BJ (cell line): ENCODE measurements at regions of chr7 and their contacts with region 1.

Region 1: GRCh38 chr7:129952653-129953560 is at the start of gene UBE2H:
- DNase-seq: peak; percentile 32
- H3K4me3 ChIP-seq: peak within 1 kb of the TSS; percentile 82
- H3K27me3 ChIP-seq: no peaks in the 10 kb centered on the region
- CTCF ChIP-seq: no peak
- polyA plus RNA-seq, gene UBE2H: 37.0 and 93.3 TPM in 2 replicates

Region 2: GRCh38 chr7:129855234-129855673 is 97.7 kb before region 1 on chr7:
- CTCF ChIA-PET with region 1: interaction called, 10 read pairs
- POLR2A ChIA-PET with region 1: no interaction called
- DNase-seq: peak; percentile 99
- H3K4me3 ChIP-seq: no peak overlapping the region
- H3K27me3 ChIP-seq: no peaks in the 10 kb centered on the region
- CTCF ChIP-seq: no peak

Region 3: GRCh38 chr7:129926618-129927017 is 26.3 kb before region 1 on chr7:
- CTCF ChIA-PET with region 1: no interaction called
- POLR2A ChIA-PET with region 1: interaction called, 21 read pairs
- DNase-seq: no peak
- H3K4me3 ChIP-seq: no peak overlapping the region
- H3K27me3 ChIP-seq: no peaks in the 10 kb centered on the region
- CTCF ChIP-seq: no peak